Astrocyte of the cerebellum (primary cell): ENCODE measurements at regions of chr3 and their contacts with region 1.

Region 1: GRCh38 chr3:133368371-133369067 is 31.3 kb upstream of the BFSP2 start:
- DNase-seq: no peak
- H3K4me3 ChIP-seq: no peak overlapping the region
- CTCF ChIP-seq: no peak

Region 2: GRCh38 chr3:133049491-133049890 is 319.0 kb before region 1 on chr3:
- in situ Hi-C with region 1: loop called (anchors 5 kb)
- DNase-seq: no peak
- H3K4me3 ChIP-seq: no peak overlapping the region
- CTCF ChIP-seq: no peak